HEK293 (cell line): ENCODE measurements at regions of chr1 and their contacts with region 1.

Region 1: GRCh38 chr1:179706339-179706941 is 36.7 kb upstream of the FAM163A start:
- H3K4me3 ChIP-seq: no peak overlapping the region
- H3K27ac ChIP-seq: no peak overlapping the region
- H3K4me1 ChIP-seq: no peaks in the 10 kb centered on the region
- CTCF ChIP-seq: peak; percentile 45; the same call in 1 of the 2 replicates

Region 2: GRCh38 chr1:179380299-179380698 is 326.1 kb before region 1 on chr1:
- CTCF ChIA-PET with region 1: no interaction called
- POLR2A ChIA-PET with region 1: no interaction called
- H3K4me3 ChIP-seq: no peak overlapping the region
- H3K27ac ChIP-seq: no peak overlapping the region
- H3K4me1 ChIP-seq: no peaks in the 10 kb centered on the region
- CTCF ChIP-seq: no peak

Region 3: GRCh38 chr1:179728271-179728670 is 21.8 kb after region 1 on chr1:
- CTCF ChIA-PET with region 1: interaction called, 11 read pairs
- POLR2A ChIA-PET with region 1: no interaction called
- H3K4me3 ChIP-seq: no peak overlapping the region
- H3K27ac ChIP-seq: no peak overlapping the region
- H3K4me1 ChIP-seq: no peaks in the 10 kb centered on the region
- CTCF ChIP-seq: no peak

Region 4: DNA sequence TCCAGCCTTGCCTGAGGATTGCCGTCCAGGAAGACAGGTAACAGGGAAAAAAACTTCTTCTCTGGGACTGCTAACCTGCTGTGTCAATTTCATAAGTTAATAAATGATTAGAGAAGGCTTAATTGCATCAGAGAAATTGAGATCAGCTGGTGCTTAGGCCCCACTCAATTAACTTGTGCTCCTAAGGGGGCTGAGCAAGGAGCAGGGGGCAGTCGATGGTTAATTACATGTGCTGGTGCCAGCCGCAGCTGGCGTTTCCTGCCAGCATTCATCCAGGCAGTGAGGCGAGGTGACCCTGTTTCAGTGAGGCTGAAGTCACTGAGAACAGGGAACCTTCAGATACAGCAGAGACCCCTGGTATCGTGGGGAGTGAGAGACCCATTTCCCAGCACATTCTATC is 96.7 kb after region 1 on chr1:
- CTCF ChIA-PET with region 1: interaction called, 12 read pairs
- POLR2A ChIA-PET with region 1: no interaction called
- H3K4me3 ChIP-seq: no peak overlapping the region
- H3K27ac ChIP-seq: no peak overlapping the region
- H3K4me1 ChIP-seq: no peaks in the 10 kb centered on the region
- CTCF ChIP-seq: no peak

Region 5: DNA sequence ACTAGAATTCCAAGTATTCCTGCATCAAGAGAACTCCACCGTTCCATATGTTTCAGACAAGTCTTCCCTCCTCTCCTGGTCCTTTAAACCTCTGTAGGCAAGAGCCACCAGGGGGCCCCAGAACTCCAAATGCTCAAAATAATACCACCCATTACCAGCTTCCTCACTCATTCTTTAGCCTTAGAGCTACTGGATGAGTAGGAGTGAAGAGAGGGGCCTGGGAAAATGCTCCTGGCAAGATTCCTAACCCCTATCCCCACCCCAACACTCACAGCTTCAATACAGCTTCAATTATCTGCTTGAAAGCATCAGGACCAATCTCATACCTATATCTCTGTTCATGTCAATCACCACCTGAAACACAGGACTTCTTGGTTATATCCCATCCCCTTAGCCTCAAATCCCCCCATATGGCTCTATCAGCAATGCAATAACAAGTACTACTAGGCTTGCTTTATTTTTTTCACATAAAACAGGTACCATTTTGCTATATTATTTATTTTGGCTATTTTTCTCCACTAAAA is 161.4 kb after region 1 on chr1:
- CTCF ChIA-PET with region 1: interaction called, 10 read pairs
- POLR2A ChIA-PET with region 1: no interaction called
- H3K4me3 ChIP-seq: no peak overlapping the region
- H3K27ac ChIP-seq: no peak overlapping the region
- H3K4me1 ChIP-seq: no peaks in the 10 kb centered on the region
- CTCF ChIP-seq: peak; percentile 43

Region 6: DNA sequence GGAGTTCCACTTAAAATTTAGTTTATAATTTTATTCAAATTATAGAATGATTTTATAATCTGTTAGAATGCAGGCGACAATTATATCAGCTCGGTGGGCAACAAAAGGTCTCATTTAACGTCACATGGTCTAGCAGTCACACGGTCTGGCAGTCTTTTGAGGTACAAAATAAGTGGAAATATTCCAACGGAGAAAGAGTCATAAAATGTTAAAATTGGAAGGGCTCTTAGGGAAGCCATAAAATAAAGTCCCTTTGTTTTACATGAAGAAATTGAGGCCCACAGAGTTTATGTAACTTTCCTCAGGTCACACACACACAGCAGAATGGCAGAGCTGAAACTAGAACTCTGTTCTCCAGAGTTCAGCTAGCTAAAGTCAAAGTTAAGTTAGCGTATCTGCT is 363.8 kb after region 1 on chr1:
- CTCF ChIA-PET with region 1: no interaction called
- POLR2A ChIA-PET with region 1: no interaction called
- H3K4me3 ChIP-seq: no peak overlapping the region
- H3K27ac ChIP-seq: no peak overlapping the region
- H3K4me1 ChIP-seq: no peaks in the 10 kb centered on the region
- CTCF ChIP-seq: no peak

Region 7: GRCh38 chr1:180178511-180179161 is 472.2 kb after region 1 on chr1:
- CTCF ChIA-PET with region 1: interaction called, 93 read pairs
- POLR2A ChIA-PET with region 1: no interaction called
- H3K4me3 ChIP-seq: no peak overlapping the region
- H3K27ac ChIP-seq: no peak overlapping the region
- H3K4me1 ChIP-seq: no peaks in the 10 kb centered on the region
- CTCF ChIP-seq: peak; percentile 55